Activated T-helper 1 cell treated with anti-CD3 and anti-CD28 coated beads, Interleukin-12 subunit alpha, Interleukin-12 subunit beta, Interleukin-2, Interleukin-4 antibody, amounts not matched to agents 30 ng/mL and 10 ng/mL and 1 ng/mL, durations not matched to agents 14 hours and 24 hours and 36 hours (primary cell): ENCODE measurements at regions of chr9 and their contacts with region 1.

Region 1: DNA sequence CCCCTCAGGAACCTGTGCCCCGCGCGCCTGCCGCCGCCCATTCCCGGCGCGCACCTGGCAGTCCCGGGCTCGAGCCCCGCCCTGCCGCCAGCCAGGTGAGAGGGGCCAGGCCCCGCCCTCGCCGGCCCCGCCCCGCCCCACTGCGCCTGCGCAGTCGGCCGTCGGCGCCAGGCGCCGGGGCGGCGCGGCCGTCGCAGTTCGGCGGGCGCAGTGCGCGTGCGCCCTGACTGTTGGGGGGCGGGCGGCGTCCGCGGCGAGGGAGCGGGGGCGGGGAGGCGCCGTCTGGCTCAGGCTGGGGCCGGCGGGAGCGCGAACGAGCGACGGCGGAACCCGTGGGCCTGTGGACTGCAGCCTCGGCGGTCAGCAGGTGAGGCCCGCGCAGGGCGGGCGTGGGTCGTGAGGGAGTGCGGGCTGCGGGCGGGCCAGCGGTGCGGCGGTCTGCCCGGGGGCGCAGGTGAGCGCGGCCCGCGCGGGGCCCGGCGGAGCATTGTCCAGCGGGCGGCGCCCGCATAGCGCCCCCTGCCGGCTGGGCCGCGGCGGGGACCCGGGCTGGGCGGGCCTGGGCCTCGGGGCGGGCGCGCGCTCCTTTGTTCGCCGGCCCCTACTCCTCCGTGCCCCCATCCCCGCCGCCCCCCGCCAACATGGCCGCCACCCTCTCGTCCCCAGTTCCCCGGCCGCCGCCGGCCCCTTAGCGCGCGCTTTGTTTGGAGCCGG is at the start of gene SPIN1:
- DNase-seq: peak; percentile 80
- H3K4me3 Mint-ChIP-seq: peak within 1 kb of the TSS; percentile 96
- H3K27ac Mint-ChIP-seq: peak within 1 kb of the TSS; percentile 97
- H3K4me1 Mint-ChIP-seq: peaks cover 41% of the 10 kb centered on the region
- H3K27me3 Mint-ChIP-seq: peaks cover 4% of the 10 kb centered on the region
- total RNA-seq, gene SPIN1: 39.1 and 41.8 TPM in 2 replicates

Region 2: DNA sequence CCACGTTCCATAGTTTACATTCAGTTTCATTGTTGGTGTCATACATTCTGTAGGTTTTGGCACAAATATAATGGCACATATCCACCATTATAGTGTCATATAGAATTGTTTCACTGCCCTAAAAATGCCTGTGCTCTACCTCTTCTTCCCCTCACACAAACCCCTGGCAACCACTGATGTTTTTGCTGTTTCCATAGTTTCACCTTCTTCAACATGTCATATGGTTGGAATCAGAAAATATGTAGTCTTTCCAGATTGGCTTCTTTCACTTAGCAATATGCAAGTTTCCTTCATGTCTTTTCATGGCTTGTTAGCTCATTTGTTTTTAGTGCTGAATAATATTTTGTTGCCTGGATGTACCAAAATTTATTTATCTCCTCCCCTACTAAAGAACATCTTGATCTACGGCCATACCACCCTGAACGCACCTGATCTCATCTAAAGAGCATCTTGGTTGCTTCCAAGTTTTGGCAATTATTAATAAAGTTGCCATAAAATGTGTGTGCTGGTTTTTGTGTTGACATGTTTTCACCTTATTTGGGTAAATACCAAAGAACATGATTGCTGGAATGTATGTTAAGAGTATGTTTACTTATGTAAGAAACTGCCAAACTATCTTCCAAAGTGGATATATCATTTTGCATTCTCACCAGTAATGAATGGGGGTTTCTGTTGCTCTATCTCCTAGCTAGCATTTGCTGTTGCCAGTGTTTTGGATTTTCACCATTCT is 397.0 kb before region 1 on chr9:
- intact Hi-C with region 1: no loop called
- DNase-seq: no peak
- H3K4me3 Mint-ChIP-seq: no peak overlapping the region
- H3K27ac Mint-ChIP-seq: no peak overlapping the region
- H3K4me1 Mint-ChIP-seq: no peaks in the 10 kb centered on the region
- H3K27me3 Mint-ChIP-seq: peaks cover 13% of the 10 kb centered on the region

Region 3: DNA sequence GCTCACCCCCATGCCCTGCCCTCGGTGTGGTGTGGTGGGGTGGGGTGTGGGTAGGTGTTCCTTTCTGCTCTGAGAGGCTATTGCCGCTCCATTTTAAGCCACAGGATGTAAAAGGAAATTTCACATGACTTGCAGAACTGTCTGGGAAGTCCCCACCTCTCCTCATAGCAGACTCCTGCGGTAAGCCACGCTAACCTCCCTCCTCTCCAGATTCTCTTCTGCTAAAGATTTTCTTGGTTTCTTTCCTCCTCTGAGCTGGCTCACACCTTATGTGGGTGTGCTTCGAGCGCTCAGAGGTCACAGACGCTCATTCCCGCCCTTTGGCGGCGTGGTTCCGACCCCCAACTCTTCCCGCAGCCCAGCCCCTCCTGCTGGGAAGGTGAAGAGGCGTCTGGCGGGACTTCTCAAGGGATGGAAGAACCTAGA is 381.1 kb before region 1 on chr9:
- intact Hi-C with region 1: loop called (anchors 1 kb)
- DNase-seq: peak; percentile 39
- H3K4me3 Mint-ChIP-seq: no peak overlapping the region
- H3K27ac Mint-ChIP-seq: no peak overlapping the region
- H3K4me1 Mint-ChIP-seq: peaks cover 10% of the 10 kb centered on the region
- H3K27me3 Mint-ChIP-seq: peaks cover 19% of the 10 kb centered on the region

Region 4: DNA sequence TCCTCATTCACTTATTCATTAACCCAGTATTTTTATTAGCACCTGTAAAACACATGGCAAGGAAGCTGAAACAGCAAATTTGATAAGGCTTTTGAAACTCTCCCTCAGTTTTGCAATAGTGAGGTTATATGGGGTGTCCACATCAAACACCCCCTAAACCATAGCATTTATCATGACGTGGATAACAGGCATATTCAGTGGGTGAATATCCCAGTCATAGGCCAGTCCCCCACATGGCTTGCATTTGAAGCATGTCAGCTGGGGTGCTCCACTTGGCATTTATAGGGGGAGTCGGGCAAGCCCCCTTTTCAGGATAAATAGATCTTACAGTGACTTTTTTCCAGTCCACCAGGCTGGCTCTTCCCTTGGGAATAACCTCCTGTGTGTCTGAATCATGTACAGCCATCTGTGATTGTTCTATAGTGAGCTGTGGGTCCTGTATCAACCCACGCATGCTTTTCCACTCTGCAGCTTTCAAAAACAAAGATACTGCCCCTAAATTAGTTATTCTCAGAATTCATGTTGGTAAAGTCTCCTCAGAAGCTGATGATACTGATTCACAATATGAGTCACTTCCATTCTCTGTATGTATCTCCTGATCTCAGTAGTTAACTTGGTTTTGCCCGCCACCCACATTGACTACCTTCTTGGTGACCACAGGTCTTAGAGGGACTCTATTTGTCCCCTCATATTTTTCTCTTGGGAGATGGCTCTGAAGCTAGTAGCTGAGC is 84.4 kb before region 1 on chr9:
- intact Hi-C with region 1: loop called (anchors 1 kb)
- DNase-seq: peak; percentile 48
- H3K4me3 Mint-ChIP-seq: peak overlapping the region; percentile 40
- H3K27ac Mint-ChIP-seq: peak overlapping the region; percentile 87
- H3K4me1 Mint-ChIP-seq: peaks cover 52% of the 10 kb centered on the region
- H3K27me3 Mint-ChIP-seq: peaks cover 2% of the 10 kb centered on the region

Region 5: GRCh38 chr9:88433583-88434255 is 45.4 kb after region 1 on chr9:
- intact Hi-C with region 1: loop called (anchors 2 kb)
- DNase-seq: no peak
- H3K4me3 Mint-ChIP-seq: peak overlapping the region; percentile 59
- H3K27ac Mint-ChIP-seq: peak overlapping the region; percentile 78
- H3K4me1 Mint-ChIP-seq: peaks cover 45% of the 10 kb centered on the region
- H3K27me3 Mint-ChIP-seq: no peaks in the 10 kb centered on the region

Region 6: GRCh38 chr9:88578121-88579054 is 190.1 kb after region 1 on chr9:
- intact Hi-C with region 1: loop called (anchors 2 kb)
- DNase-seq: peak; percentile 46
- H3K4me3 Mint-ChIP-seq: no peak overlapping the region
- H3K27ac Mint-ChIP-seq: no peak overlapping the region
- H3K4me1 Mint-ChIP-seq: peaks cover 5% of the 10 kb centered on the region
- H3K27me3 Mint-ChIP-seq: peaks cover 14% of the 10 kb centered on the region